ENCODE measurements at regions of chr16 and their contacts with region 1.

Region 1: DNA sequence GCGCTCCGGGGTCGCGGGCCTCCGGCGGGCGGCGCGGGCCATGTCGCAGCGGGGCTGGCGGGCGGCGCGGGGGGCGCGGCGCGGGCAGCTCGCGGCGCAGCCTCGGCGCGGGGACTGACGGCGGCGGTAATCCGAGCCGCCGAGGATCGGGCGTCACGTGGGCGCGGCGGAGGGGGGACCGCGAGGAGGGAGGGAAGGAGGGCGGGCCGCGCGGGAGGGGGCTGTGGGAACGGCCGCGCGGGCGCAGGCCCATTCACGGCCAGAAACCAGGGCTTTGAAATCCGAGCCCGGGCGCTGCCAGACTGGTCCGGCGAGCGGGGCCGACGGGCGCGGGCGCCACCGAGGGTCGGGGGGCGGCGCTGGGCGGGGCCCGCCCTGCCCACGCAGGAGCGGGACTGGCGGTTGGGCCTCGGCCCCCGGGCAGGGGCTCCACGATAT is at the start of gene MTSS2:
- DNase-seq: peak; percentile 86 to 95 (median 89)
- ATAC-seq: peak; percentile 61
- H3K4me3 ChIP-seq: peak within 1 kb of the TSS; percentile 50 to 64
- H3K27ac ChIP-seq: peak within 1 kb of the TSS; percentile 55 to 71
- H3K4me1 ChIP-seq: peaks cover 43 to 91% of the 10 kb centered on the region in 2 donors
- H3K27me3 ChIP-seq: peaks cover 0 to 21% of the 10 kb centered on the region in 2 donors
- CTCF ChIP-seq: no peak
- polyA plus RNA-seq, gene MTSS2: 95.3 to 106 (median 102) TPM

Region 2: DNA sequence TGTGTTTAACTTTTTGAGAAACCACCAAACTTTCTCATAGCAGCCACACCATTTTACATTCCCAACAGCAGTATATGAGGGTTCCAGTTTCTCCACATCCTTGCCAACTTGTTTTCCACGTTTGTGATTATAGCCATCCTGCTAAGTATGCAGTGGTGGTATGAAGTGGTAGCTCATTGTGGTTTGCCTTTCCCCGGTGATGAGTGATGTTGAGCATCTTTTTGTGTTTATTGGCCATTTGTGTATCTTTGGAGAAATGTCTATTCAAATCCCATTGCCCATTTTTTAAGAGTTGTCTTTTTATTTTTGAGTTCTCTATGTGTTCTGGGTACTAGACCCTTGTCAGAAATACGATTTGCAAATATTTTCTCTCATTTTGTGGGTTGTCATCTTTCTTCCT is 145.0 kb before region 1 on chr16:
- intact Hi-C with region 1: no loop called
- DNase-seq: no peak
- ATAC-seq: no peak
- H3K4me3 ChIP-seq: no peak overlapping the region
- H3K27ac ChIP-seq: no peak overlapping the region
- H3K4me1 ChIP-seq: peaks cover 0 to 12% of the 10 kb centered on the region in 2 donors
- H3K27me3 ChIP-seq: no peaks in the 10 kb centered on the region
- CTCF ChIP-seq: no peak

Region 3: GRCh38 chr16:70737377-70738082 is 51.6 kb after region 1 on chr16:
- intact Hi-C with region 1: loop called in 1 of 2 experiments (anchors 10 kb)
- DNase-seq: peak; percentile 56 to 81 (median 62)
- ATAC-seq: peak; percentile 58
- H3K4me3 ChIP-seq: no peak overlapping the region
- H3K27ac ChIP-seq: peak overlapping the region; percentile 61 to 67
- H3K4me1 ChIP-seq: peaks cover 28 to 59% of the 10 kb centered on the region in 2 donors
- H3K27me3 ChIP-seq: no peaks in the 10 kb centered on the region
- CTCF ChIP-seq: no peak